Endothelial cell of umbilical vein (primary cell): ENCODE measurements at regions of chr20 and their contacts with region 1.

Region 1: GRCh38 chr20:36439040-36439730 is 102.1 kb upstream of the MYL9 start:
- DNase-seq: peak; percentile 44
- H3K4me3 ChIP-seq: no peak overlapping the region
- H3K27ac ChIP-seq: no peak overlapping the region
- H3K4me1 ChIP-seq: no peaks in the 10 kb centered on the region
- H3K27me3 ChIP-seq: no peaks in the 10 kb centered on the region
- CTCF ChIP-seq: peak; percentile 90 to 96
- POLR2A ChIP-seq: no peak

Region 2: GRCh38 chr20:36154700-36155628 is 284.2 kb before region 1 on chr20 and contains the start of gene EPB41L1:
- CTCF ChIA-PET with region 1: interaction called, 14 read pairs
- POLR2A ChIA-PET with region 1: no interaction called
- dilution Hi-C with region 1: no loop called
- intact Hi-C with region 1: loop called (anchors 1 kb)
- DNase-seq: no peak
- H3K4me3 ChIP-seq: peak within 1 kb of the TSS; percentile 30 to 44 (median 35)
- H3K27ac ChIP-seq: no peak within 1 kb of the TSS
- H3K4me1 ChIP-seq: peaks cover 12% of the 10 kb centered on the region
- H3K27me3 ChIP-seq: no peaks in the 10 kb centered on the region
- CTCF ChIP-seq: no peak
- POLR2A ChIP-seq: no peak
- total RNA-seq, gene EPB41L1: 11.1 and 12.2 TPM in 2 replicates

Region 3: GRCh38 chr20:36214684-36215256 is 224.4 kb before region 1 on chr20:
- CTCF ChIA-PET with region 1: interaction called, 60 read pairs
- POLR2A ChIA-PET with region 1: no interaction called
- dilution Hi-C with region 1: no loop called
- intact Hi-C with region 1: loop called (anchors 1 kb)
- DNase-seq: peak; percentile 19
- H3K4me3 ChIP-seq: no peak overlapping the region
- H3K27ac ChIP-seq: no peak overlapping the region
- H3K4me1 ChIP-seq: no peaks in the 10 kb centered on the region
- H3K27me3 ChIP-seq: peaks cover 0 to 2% of the 10 kb centered on the region in 2 experiments
- CTCF ChIP-seq: peak; percentile 49 to 60
- POLR2A ChIP-seq: no peak

Region 4: GRCh38 chr20:36273414-36274180 is 165.6 kb before region 1 on chr20:
- CTCF ChIA-PET with region 1: interaction called, 96 read pairs
- POLR2A ChIA-PET with region 1: no interaction called
- dilution Hi-C with region 1: no loop called
- intact Hi-C with region 1: no loop called
- DNase-seq: peak; percentile 26
- H3K4me3 ChIP-seq: no peak overlapping the region
- H3K27ac ChIP-seq: no peak overlapping the region
- H3K4me1 ChIP-seq: no peaks in the 10 kb centered on the region
- H3K27me3 ChIP-seq: peaks cover 0 to 3% of the 10 kb centered on the region in 2 experiments
- CTCF ChIP-seq: peak; percentile 31 to 51
- POLR2A ChIP-seq: no peak

Region 5: GRCh38 chr20:36399147-36399968 is 39.8 kb before region 1 on chr20:
- CTCF ChIA-PET with region 1: interaction called, 13 read pairs
- POLR2A ChIA-PET with region 1: no interaction called
- dilution Hi-C with region 1: no loop called
- intact Hi-C with region 1: no loop called
- DNase-seq: peak; percentile 73
- H3K4me3 ChIP-seq: no peak overlapping the region
- H3K27ac ChIP-seq: no peak overlapping the region
- H3K4me1 ChIP-seq: no peaks in the 10 kb centered on the region
- H3K27me3 ChIP-seq: peaks cover 17 to 19% of the 10 kb centered on the region in 2 experiments
- CTCF ChIP-seq: peak; percentile 66 to 67
- POLR2A ChIP-seq: no peak

Region 6: GRCh38 chr20:36449663-36450062 is 10.5 kb after region 1 on chr20:
- CTCF ChIA-PET with region 1: interaction called, 24 read pairs
- POLR2A ChIA-PET with region 1: no interaction called
- dilution Hi-C with region 1: no loop called
- intact Hi-C with region 1: no loop called
- DNase-seq: no peak
- H3K4me3 ChIP-seq: no peak overlapping the region
- H3K27ac ChIP-seq: no peak overlapping the region
- H3K4me1 ChIP-seq: no peaks in the 10 kb centered on the region
- H3K27me3 ChIP-seq: peaks cover 3 to 11% of the 10 kb centered on the region in 2 experiments
- CTCF ChIP-seq: no peak
- POLR2A ChIP-seq: no peak